ENCODE measurements at regions of chr4 and their contacts with region 1.

Region 1: GRCh38 chr4:40149960-40150385 is 46.9 kb upstream of the RHOH start:
- DNase-seq: peak; percentile 74
- H3K4me3 Mint-ChIP-seq: no peak overlapping the region
- H3K27ac Mint-ChIP-seq: no peak overlapping the region
- H3K4me1 Mint-ChIP-seq: peaks cover 27% of the 10 kb centered on the region
- H3K27me3 Mint-ChIP-seq: no peaks in the 10 kb centered on the region

Region 2: GRCh38 chr4:40325189-40326019 is 175.4 kb after region 1 on chr4:
- CTCF ChIA-PET with region 1: interaction called, 31 read pairs
- POLR2A ChIA-PET with region 1: no interaction called
- intact Hi-C with region 1: loop called (anchors 1 kb)
- DNase-seq: peak; percentile 75
- H3K4me3 Mint-ChIP-seq: no peak overlapping the region
- H3K27ac Mint-ChIP-seq: no peak overlapping the region
- H3K4me1 Mint-ChIP-seq: peaks cover 18% of the 10 kb centered on the region
- H3K27me3 Mint-ChIP-seq: no peaks in the 10 kb centered on the region

Measured in activated CD4-positive, alpha-beta memory T cell treated with anti-CD3 and anti-CD28 coated beads for 36 hours (primary cell).